Dorsolateral prefrontal cortex (tissue), 120 donors: ENCODE measurements at regions of chr10 and their contacts with region 1.

Region 1: GRCh38 chr10:129258283-129258923 is 208.6 kb upstream of the MGMT start:
- DNase-seq: no peak
- H3K4me3 ChIP-seq: no peak overlapping the region
- H3K27ac ChIP-seq: no peak overlapping the region
- H3K27me3 ChIP-seq: peaks cover 0 to 16% (median 0%) of the 10 kb centered on the region in 45 donors
- CTCF ChIP-seq: no peak

Region 2: DNA sequence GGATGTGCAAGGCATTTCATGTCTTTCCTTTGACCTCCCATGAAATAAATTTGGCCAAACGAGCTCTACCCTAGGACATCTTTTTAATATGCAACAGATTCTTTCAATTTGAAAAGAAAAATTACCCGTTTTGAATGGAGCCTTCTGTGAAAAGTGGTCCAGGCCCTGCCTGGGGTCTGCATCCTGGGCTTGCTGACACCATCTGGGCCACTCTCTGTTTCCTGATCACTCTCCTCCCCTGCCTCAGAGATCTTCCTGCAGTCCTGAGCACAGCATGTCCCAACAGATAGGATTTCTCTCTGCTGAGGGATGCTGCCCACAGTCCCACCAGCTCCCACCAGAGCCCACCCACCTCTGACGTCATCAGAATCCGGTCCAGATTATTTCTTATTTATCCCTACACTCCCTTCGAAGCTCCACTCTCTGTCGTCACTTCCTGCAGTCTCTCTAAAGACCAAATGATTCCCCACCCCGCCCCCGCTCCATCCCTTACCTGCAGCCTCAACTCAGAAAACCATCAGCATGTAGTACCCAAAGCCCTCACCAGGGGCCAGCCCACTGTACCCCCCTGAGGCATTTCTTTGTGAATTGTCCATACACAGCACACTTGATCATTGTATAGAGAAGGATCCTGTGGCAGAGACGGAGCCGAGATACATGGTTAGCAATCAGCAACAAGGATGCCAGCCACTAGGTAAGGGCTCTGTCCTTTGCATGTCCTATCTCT is 16.5 kb after region 1 on chr10:
- intact Hi-C with region 1: loop called in 1 of 2 experiments (anchors 2 kb)
- DNase-seq: no peak
- H3K4me3 ChIP-seq: no peak overlapping the region
- H3K27ac ChIP-seq: no peak overlapping the region
- H3K27me3 ChIP-seq: peaks cover 0 to 27% (median 7%) of the 10 kb centered on the region in 45 donors
- CTCF ChIP-seq: no peak

Region 3: GRCh38 chr10:129288999-129289398 is 30.6 kb after region 1 on chr10:
- intact Hi-C with region 1: no loop called
- DNase-seq: no peak
- H3K4me3 ChIP-seq: no peak overlapping the region
- H3K27ac ChIP-seq: no peak overlapping the region
- H3K27me3 ChIP-seq: peaks cover 0 to 39% (median 0%) of the 10 kb centered on the region in 45 donors
- CTCF ChIP-seq: no peak